ENCODE measurements at regions of chr3 and their contacts with region 1.

Region 1: GRCh38 chr3:126267226-126267975 is 87.0 kb upstream of the ALDH1L1 start:
- DNase-seq: peak; percentile 72
- H3K4me3 ChIP-seq: peak overlapping the region in 2 of 3 experiments; percentile 37 to 40
- H3K27ac ChIP-seq: peak overlapping the region; percentile 21
- H3K4me1 ChIP-seq: peaks cover 42% of the 10 kb centered on the region
- H3K27me3 ChIP-seq: no peaks in the 10 kb centered on the region
- CTCF ChIP-seq: peak in 1 of 2 donors; percentile 25

Region 2: GRCh38 chr3:126287536-126288241 is 20.3 kb after region 1 on chr3:
- CTCF ChIA-PET with region 1: no interaction called
- dilution Hi-C with region 1: no loop called
- in situ Hi-C with region 1: no loop called
- intact Hi-C with region 1: loop called (anchors 2 kb)
- DNase-seq: peak; percentile 37
- H3K4me3 ChIP-seq: peak overlapping the region; percentile 1 to 44 (median 39)
- H3K27ac ChIP-seq: peak overlapping the region; percentile 10
- H3K4me1 ChIP-seq: peaks cover 30% of the 10 kb centered on the region
- H3K27me3 ChIP-seq: no peaks in the 10 kb centered on the region
- CTCF ChIP-seq: no peak

Region 3: DNA sequence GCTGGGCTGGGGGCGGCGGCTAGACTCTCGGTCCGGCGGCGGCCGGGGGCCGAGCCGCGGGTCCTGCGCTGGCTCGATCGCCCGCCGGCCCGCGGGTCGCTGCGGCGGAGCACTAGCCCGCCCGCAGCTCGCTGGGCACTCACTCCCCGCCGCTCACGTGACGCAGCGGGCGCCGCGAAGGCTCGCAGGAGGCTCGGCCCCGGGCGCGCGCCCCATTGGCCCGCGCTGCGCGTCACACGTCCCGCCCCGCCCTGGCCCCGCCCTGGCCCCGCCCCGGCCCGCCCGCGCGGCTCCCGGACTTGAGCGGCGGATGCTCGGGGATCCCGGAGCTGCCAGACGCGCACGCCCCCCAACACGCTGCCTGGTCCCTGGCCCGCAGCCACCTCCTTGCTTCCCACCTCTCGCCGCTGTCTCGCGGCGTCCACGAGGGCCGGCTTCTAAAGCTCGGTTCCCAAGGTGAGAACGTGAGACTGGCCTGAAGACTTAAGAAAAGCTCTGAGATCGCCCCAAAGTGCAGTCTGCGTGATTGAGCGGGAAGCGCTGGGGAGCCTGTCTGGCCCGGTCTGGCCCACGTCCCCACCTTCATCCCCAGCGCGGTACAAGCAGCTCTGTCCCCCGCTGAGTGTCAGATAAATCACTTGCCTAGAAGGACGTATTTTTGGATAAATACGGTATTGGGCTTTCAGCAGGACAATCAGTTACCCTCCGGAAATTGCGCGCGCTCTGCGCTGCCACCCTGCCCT is 90.1 kb after region 1 on chr3 and contains the start of gene KLF15:
- CTCF ChIA-PET with region 1: no interaction called
- dilution Hi-C with region 1: no loop called
- in situ Hi-C with region 1: no loop called
- intact Hi-C with region 1: loop called (anchors 5 kb)
- DNase-seq: peak; percentile 71
- H3K4me3 ChIP-seq: peak within 1 kb of the TSS; percentile 59 to 68 (median 64)
- H3K27ac ChIP-seq: no peak within 1 kb of the TSS
- H3K4me1 ChIP-seq: peaks cover 18% of the 10 kb centered on the region
- H3K27me3 ChIP-seq: peaks cover 10% of the 10 kb centered on the region
- CTCF ChIP-seq: no peak
- total RNA-seq, gene KLF15: 0.17 to 0.61 TPM

Region 4: DNA sequence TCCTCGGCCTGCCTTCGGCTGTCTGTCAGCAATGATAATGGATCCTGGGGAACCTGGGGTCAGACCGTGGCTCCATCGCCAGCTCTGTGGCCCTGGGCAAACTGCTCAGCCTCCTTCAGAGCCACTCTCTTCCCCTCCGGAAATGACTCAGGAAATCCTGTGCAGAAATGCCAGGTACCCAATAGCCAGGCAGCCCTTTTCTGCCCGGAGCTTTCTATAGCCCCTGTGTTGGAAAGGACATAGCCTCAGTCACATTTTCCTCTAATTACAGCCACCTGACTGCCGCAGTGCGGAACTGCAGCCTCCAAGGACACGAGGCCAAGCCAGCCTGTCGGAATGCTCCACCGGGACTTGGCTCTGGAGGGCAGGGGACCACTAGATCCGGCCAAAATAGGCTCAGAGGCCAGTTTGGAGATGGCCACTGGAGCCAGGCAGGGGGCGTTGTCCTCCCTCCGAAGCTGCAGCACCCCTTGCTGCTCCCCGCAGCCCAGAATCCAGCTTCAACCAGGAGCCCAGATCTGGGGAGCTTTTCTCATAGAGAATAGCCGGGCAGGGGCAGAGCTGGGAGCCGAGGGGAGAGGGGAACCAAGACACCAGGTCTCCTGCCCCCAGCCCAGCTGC is 219.9 kb after region 1 on chr3:
- CTCF ChIA-PET with region 1: no interaction called
- dilution Hi-C with region 1: no loop called
- in situ Hi-C with region 1: no loop called
- intact Hi-C with region 1: no loop called
- DNase-seq: peak; percentile 60
- H3K4me3 ChIP-seq: no peak overlapping the region
- H3K27ac ChIP-seq: no peak overlapping the region
- H3K4me1 ChIP-seq: peaks cover 14% of the 10 kb centered on the region
- H3K27me3 ChIP-seq: no peaks in the 10 kb centered on the region
- CTCF ChIP-seq: peak; percentile 3 to 33

Measured in mammary epithelial cell (primary cell).